Naive thymus-derived CD4-positive, alpha-beta T cell (primary cell): ENCODE measurements at regions of chr1 and their contacts with region 1.

Region 1: GRCh38 chr1:9942939-9943788 is at the starts of genes LZIC and NMNAT1:
- DNase-seq: peak; percentile 71 to 92 (median 82)
- ATAC-seq: peak; percentile 98
- H3K4me3 ChIP-seq: peak within 1 kb of the TSS; percentile 71
- H3K4me3 Mint-ChIP-seq: peak within 1 kb of the TSS; percentile 91 to 98 (median 97)
- H3K27ac ChIP-seq: peak within 1 kb of the TSS; percentile 92
- H3K27ac Mint-ChIP-seq: peak within 1 kb of the TSS; percentile 93 to 99 (median 97)
- H3K4me1 ChIP-seq: peaks cover 0 to 9% of the 10 kb centered on the region in 2 donors
- H3K4me1 Mint-ChIP-seq: peaks cover 17 to 33% (median 26%) of the 10 kb centered on the region in 7 donors
- H3K27me3 ChIP-seq: no peaks in the 10 kb centered on the region
- H3K27me3 Mint-ChIP-seq: no peaks in the 10 kb centered on the region
- total RNA-seq, gene LZIC: 18.0 to 35.1 (median 31.0) TPM
- total RNA-seq, gene NMNAT1: 2.7 to 8.3 (median 7.5) TPM

Region 2: GRCh38 chr1:9340172-9340854 is 602.9 kb before region 1 on chr1:
- CTCF ChIA-PET with region 1: no interaction called
- POLR2A ChIA-PET with region 1: no interaction called
- intact Hi-C with region 1: no loop called
- DNase-seq: no peak
- ATAC-seq: no peak
- H3K4me3 ChIP-seq: no peak overlapping the region
- H3K4me3 Mint-ChIP-seq: no peak overlapping the region
- H3K27ac ChIP-seq: no peak overlapping the region
- H3K27ac Mint-ChIP-seq: no peak overlapping the region
- H3K4me1 ChIP-seq: no peaks in the 10 kb centered on the region
- H3K4me1 Mint-ChIP-seq: peaks cover 0 to 5% (median 0%) of the 10 kb centered on the region in 7 donors
- H3K27me3 ChIP-seq: no peaks in the 10 kb centered on the region
- H3K27me3 Mint-ChIP-seq: no peaks in the 10 kb centered on the region

Region 3: GRCh38 chr1:9539165-9539828 is 403.9 kb before region 1 on chr1 and contains the start of gene SLC25A33:
- CTCF ChIA-PET with region 1: no interaction called
- POLR2A ChIA-PET with region 1: no interaction called
- intact Hi-C with region 1: loop called in 1 of 2 experiments (anchors 2 kb)
- DNase-seq: peak; percentile 92 to 99 (median 95)
- ATAC-seq: peak; percentile 99
- H3K4me3 ChIP-seq: peak within 1 kb of the TSS; percentile 58
- H3K4me3 Mint-ChIP-seq: peak within 1 kb of the TSS; percentile 86 to 93 (median 90)
- H3K27ac ChIP-seq: peak within 1 kb of the TSS; percentile 73
- H3K27ac Mint-ChIP-seq: peak within 1 kb of the TSS; percentile 85 to 97 (median 91)
- H3K4me1 ChIP-seq: peaks cover 5 to 8% of the 10 kb centered on the region in 2 donors
- H3K4me1 Mint-ChIP-seq: peaks cover 18 to 38% (median 31%) of the 10 kb centered on the region in 7 donors
- H3K27me3 ChIP-seq: no peaks in the 10 kb centered on the region
- H3K27me3 Mint-ChIP-seq: no peaks in the 10 kb centered on the region
- total RNA-seq, gene SLC25A33: 2.5 to 5.8 (median 3.9) TPM

Region 4: GRCh38 chr1:9874959-9875635 is 68.1 kb before region 1 on chr1:
- CTCF ChIA-PET with region 1: interaction called, 12 read pairs
- POLR2A ChIA-PET with region 1: no interaction called
- intact Hi-C with region 1: loop called (anchors 1 kb)
- DNase-seq: peak; percentile 54 to 73 (median 64)
- ATAC-seq: peak; percentile 93
- H3K4me3 ChIP-seq: no peak overlapping the region
- H3K4me3 Mint-ChIP-seq: peak overlapping the region in 1 of 10 donors; percentile 14
- H3K27ac ChIP-seq: no peak overlapping the region
- H3K27ac Mint-ChIP-seq: peak overlapping the region in 3 of 9 donors; percentile 16 to 23 (median 16)
- H3K4me1 ChIP-seq: no peaks in the 10 kb centered on the region
- H3K4me1 Mint-ChIP-seq: peaks cover 6 to 9% (median 7%) of the 10 kb centered on the region in 7 donors
- H3K27me3 ChIP-seq: no peaks in the 10 kb centered on the region
- H3K27me3 Mint-ChIP-seq: no peaks in the 10 kb centered on the region

Region 5: GRCh38 chr1:10209905-10210810 is 267.0 kb after region 1 on chr1 and contains the start of gene KIF1B:
- CTCF ChIA-PET with region 1: no interaction called
- POLR2A ChIA-PET with region 1: no interaction called
- intact Hi-C with region 1: loop called in 1 of 2 experiments (anchors 1 kb)
- DNase-seq: peak; percentile 93 to 98 (median 95)
- ATAC-seq: peak; percentile 99
- H3K4me3 ChIP-seq: peak within 1 kb of the TSS; percentile 94
- H3K4me3 Mint-ChIP-seq: peak within 1 kb of the TSS; percentile 83 to 93 (median 90)
- H3K27ac ChIP-seq: peak within 1 kb of the TSS; percentile 75
- H3K27ac Mint-ChIP-seq: peak within 1 kb of the TSS; percentile 51 to 82 (median 67)
- H3K4me1 ChIP-seq: peaks cover 5 to 15% of the 10 kb centered on the region in 2 donors
- H3K4me1 Mint-ChIP-seq: peaks cover 14 to 37% (median 21%) of the 10 kb centered on the region in 7 donors
- H3K27me3 ChIP-seq: peaks cover 0 to 4% of the 10 kb centered on the region in 2 donors
- H3K27me3 Mint-ChIP-seq: peaks cover 0 to 8% (median 0%) of the 10 kb centered on the region in 5 donors
- total RNA-seq, gene KIF1B: 10.4 to 21.6 (median 13.4) TPM